Activated T-helper 2 cell treated with anti-CD3 and anti-CD28 coated beads, Interferon-gamma antibody, Interleukin-2, Interleukin-4, amounts not matched to agents 10 μg/mL and 5 μg/mL and 100 μg/mL, durations not matched to agents 14 hours and 24 hours and 36 hours (primary cell): ENCODE measurements at regions of chr9 and their contacts with region 1.

Region 1: GRCh38 chr9:131999692-132000551 is 79.7 kb downstream of the MED27 start:
- DNase-seq: no peak
- H3K4me3 Mint-ChIP-seq: no peak overlapping the region
- H3K27ac Mint-ChIP-seq: no peak overlapping the region
- H3K4me1 Mint-ChIP-seq: peaks cover 19% of the 10 kb centered on the region
- H3K27me3 Mint-ChIP-seq: no peaks in the 10 kb centered on the region

Region 2: GRCh38 chr9:131982671-131983239 is 17.2 kb before region 1 on chr9:
- intact Hi-C with region 1: no loop called
- DNase-seq: no peak
- H3K4me3 Mint-ChIP-seq: no peak overlapping the region
- H3K27ac Mint-ChIP-seq: no peak overlapping the region
- H3K4me1 Mint-ChIP-seq: peaks cover 2% of the 10 kb centered on the region
- H3K27me3 Mint-ChIP-seq: no peaks in the 10 kb centered on the region

Region 3: DNA sequence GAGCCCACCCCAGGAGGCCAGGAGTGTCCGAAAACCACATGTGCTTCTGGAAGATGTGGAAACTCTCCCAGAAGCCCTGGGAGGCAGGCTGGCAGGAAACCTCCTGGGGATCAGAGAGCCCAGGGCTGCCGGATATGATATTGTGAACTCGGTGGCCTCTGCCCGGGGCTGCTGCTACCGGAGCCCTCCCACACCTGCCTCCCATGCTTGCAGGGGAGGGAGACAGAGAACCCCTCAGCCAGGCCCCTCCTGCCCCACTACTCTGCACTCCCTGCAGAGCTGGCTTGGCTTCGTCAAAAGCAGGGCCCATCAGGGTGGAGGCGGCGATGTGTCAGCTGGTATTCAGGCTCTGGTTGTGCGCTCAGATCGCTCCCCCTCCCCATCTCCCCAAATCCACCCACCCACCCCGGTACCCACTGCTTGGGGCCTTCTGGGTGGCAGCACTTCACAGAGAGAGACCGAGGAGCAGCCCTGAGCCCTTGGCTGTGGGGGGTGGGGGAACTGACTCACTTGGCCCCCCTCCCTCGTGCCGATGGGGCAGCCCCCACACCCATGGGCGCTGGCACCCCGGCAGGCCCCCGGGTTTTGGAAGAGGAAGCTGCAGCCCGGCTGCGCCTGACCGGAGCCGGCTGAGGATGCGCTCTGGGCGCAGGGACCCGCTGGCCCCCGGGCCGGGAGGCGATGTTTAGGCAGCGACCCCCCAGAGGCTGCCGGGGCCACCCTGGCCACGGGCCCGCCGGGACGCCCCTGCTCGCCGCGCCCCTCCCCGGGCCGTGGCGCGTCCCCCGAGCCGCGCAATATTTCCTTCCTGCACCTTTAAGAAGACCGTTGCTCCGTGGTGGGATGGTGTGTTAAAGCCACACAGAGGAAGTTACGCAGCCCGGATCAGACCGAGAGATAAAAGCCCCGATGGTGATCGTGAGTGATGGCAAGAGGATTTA is 161.2 kb after region 1 on chr9:
- intact Hi-C with region 1: loop called (anchors 5 kb)
- DNase-seq: peak; percentile 60
- H3K4me3 Mint-ChIP-seq: peak overlapping the region; percentile 93
- H3K27ac Mint-ChIP-seq: peak overlapping the region; percentile 87
- H3K4me1 Mint-ChIP-seq: peaks cover 16% of the 10 kb centered on the region
- H3K27me3 Mint-ChIP-seq: peaks cover 51% of the 10 kb centered on the region